Calu3 (cell line): ENCODE measurements at regions of chr5 and their contacts with region 1.

Region 1: GRCh38 chr5:38666668-38667498 is 110.4 kb upstream of the LIFR start:
- DNase-seq: peak; percentile 52
- H3K4me3 Mint-ChIP-seq: no peak overlapping the region
- H3K27ac Mint-ChIP-seq: no peak overlapping the region
- H3K4me1 Mint-ChIP-seq: peaks cover 14% of the 10 kb centered on the region
- H3K27me3 Mint-ChIP-seq: peaks cover 22% of the 10 kb centered on the region
- CTCF ChIP-seq: peak; percentile 54

Region 2: GRCh38 chr5:38497946-38498345 is 168.9 kb before region 1 on chr5:
- CTCF ChIA-PET with region 1: no interaction called
- intact Hi-C with region 1: loop called (anchors 2 kb)
- DNase-seq: no peak
- H3K4me3 Mint-ChIP-seq: no peak overlapping the region
- H3K27ac Mint-ChIP-seq: no peak overlapping the region
- H3K4me1 Mint-ChIP-seq: no peaks in the 10 kb centered on the region
- H3K27me3 Mint-ChIP-seq: no peaks in the 10 kb centered on the region
- CTCF ChIP-seq: no peak

Region 3: GRCh38 chr5:38551030-38552017 is 115.6 kb before region 1 on chr5:
- CTCF ChIA-PET with region 1: no interaction called
- intact Hi-C with region 1: loop called (anchors 1 kb)
- DNase-seq: peak; percentile 22
- H3K4me3 Mint-ChIP-seq: no peak overlapping the region
- H3K27ac Mint-ChIP-seq: no peak overlapping the region
- H3K4me1 Mint-ChIP-seq: peaks cover 6% of the 10 kb centered on the region
- H3K27me3 Mint-ChIP-seq: no peaks in the 10 kb centered on the region
- CTCF ChIP-seq: peak; percentile 75

Region 4: DNA sequence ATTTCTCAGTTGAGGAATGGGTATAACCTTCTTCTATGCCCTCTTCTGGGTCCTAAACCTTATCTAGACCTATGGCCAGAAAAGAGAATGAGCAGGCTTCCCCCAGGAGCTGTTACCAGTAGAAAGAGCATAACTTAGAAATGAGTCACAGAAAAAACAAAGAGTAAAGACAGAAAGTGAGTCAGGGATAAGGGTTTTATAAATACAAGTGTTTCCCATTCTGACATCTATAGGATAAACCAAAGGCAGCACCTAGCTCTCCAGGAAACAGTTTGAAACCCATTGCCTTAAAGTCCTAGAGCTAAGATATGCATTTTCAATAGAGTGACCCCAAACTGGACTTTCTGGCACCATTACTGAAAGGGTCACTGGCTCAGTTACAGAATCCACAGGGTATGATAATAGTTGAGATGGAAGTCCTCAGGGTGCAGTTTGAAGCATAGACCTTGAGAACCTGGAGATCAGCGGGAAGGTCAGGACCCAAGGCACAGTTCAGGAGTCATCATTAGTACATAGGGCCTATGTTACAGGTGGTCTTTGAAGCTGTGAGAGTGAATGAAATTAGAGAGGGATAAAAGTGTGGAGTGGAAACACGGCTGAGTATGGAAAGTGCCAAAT is 67.8 kb before region 1 on chr5:
- CTCF ChIA-PET with region 1: no interaction called
- intact Hi-C with region 1: loop called (anchors 5 kb)
- DNase-seq: peak; percentile 41
- H3K4me3 Mint-ChIP-seq: peak overlapping the region; percentile 32
- H3K27ac Mint-ChIP-seq: peak overlapping the region; percentile 80
- H3K4me1 Mint-ChIP-seq: peaks cover 74% of the 10 kb centered on the region
- H3K27me3 Mint-ChIP-seq: no peaks in the 10 kb centered on the region
- CTCF ChIP-seq: no peak